ENCODE measurements at regions of chr15 and their contacts with region 1.

Region 1: DNA sequence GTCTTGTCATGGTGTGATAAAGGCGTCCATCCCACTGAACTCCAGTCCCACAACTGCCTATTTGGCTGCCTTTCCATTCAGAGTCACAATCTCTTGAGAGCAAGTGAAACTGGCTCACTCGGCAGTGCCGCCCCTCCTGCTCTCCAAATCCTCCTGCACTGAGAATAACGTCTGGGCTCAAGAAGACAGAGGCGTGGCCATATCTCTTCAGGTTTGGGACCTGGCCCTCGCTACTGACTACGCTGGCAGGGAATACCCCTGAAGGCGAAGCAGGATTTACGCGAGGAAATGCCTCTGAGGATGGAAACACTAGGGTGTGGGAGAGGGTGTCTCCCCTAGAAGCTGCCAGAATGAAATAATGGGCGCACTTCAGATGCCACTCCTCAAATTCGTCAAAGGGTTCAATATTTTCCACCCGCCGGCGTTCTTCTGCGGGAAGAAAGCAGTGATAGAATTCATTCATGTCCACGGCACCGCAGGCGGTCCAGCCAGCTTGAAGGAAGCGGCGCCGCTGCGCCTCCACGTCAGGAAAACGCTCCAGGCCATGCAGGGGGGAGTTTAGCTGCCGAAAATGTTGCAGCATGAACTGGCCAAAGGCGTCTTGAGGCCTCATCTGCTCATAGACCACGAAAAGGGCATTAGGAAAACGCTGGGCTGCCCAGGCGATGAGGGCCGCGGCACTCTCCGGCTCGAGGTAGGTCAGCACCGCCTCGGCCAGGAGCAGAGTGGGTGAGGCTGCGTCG is 985 bp downstream of the LCMT2 start:
- DNase-seq: peak; percentile 14
- H3K4me3 ChIP-seq: peak overlapping the region; percentile 42 to 88
- H3K27ac ChIP-seq: peak overlapping the region; percentile 80 to 91
- H3K4me1 ChIP-seq: peaks cover 10% of the 10 kb centered on the region
- H3K27me3 ChIP-seq: no peaks in the 10 kb centered on the region
- CTCF ChIP-seq: no peak
- POLR2A ChIP-seq: no peak

Region 2: GRCh38 chr15:43390723-43391122 is 61.3 kb after region 1 on chr15:
- intact Hi-C with region 1: loop called (anchors 5 kb)
- DNase-seq: no peak
- H3K4me3 ChIP-seq: no peak overlapping the region
- H3K27ac ChIP-seq: no peak overlapping the region
- H3K4me1 ChIP-seq: no peaks in the 10 kb centered on the region
- H3K27me3 ChIP-seq: no peaks in the 10 kb centered on the region
- CTCF ChIP-seq: no peak
- POLR2A ChIP-seq: no peak